ENCODE measurements at regions of chr1 and their contacts with region 1.

Region 1: DNA sequence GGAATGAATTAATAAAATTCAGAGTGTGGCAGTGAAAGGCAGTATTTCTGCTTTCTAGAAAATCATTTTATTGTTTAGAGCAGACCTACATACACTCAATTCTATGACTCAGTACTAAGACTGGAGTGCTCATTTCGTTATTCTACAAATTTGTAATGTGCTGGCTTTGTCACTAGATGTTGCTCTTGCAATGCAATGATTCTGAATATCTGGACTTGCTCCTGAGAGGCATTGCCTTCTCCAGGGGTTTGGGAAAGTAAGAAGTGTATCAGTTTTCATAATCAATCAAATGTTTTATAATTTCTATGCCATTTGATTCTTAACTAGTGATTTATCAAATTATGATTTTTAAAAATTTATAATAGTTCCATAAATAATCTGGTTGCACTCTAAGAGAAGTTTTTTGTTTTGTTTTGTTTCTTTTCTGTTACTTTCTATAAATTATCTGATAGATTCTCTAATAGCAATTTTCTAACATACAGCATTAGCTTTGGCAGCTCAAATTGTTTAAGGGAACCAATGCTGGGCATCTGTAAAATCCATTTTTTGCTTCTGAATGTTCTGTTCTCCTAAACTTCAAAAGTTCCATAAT is 280.5 kb upstream of the SGIP1 start:
- DNase-seq: peak in 6 of 9 donors; percentile 29 to 58 (median 46)
- ATAC-seq: peak; percentile 83
- H3K4me3 ChIP-seq: no peak overlapping the region
- H3K4me3 Mint-ChIP-seq: no peak overlapping the region
- H3K27ac ChIP-seq: no peak overlapping the region
- H3K27ac Mint-ChIP-seq: peak overlapping the region in 2 of 9 donors; percentile 19 to 64
- H3K4me1 ChIP-seq: peaks cover 10 to 12% of the 10 kb centered on the region in 2 donors
- H3K4me1 Mint-ChIP-seq: peaks cover 6 to 57% (median 19%) of the 10 kb centered on the region in 7 donors
- H3K27me3 ChIP-seq: no peaks in the 10 kb centered on the region
- H3K27me3 Mint-ChIP-seq: no peaks in the 10 kb centered on the region

Region 2: DNA sequence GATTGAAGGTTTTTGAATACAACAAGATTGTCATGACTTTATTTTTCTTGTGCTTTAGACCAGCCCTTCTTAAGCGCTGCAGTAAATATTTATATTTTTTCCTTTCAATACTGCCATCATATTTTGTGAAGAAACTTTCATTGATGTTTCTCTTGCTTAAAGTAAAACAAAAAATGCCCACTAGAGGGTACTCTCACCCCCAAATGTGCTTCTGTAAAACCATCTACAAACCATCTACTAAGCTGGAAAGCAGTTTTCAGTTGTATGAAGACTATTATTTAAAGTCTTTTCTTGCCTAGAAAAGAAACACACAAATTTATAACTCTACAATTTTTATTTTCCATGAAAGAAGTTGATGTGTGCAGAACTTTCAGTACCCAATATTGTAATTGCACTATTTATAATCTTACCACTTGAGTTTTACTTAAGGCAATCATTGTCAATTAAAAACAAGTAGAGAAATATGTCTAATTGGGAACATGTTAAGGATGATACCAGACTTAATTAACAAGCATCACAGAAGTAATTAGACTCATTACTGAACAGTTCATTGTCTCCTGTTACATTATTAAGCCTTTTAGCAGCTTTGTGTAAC is 822.2 kb before region 1 on chr1:
- CTCF ChIA-PET with region 1: no interaction called
- POLR2A ChIA-PET with region 1: no interaction called
- intact Hi-C with region 1: loop called in 1 of 2 experiments (anchors 5 kb)
- DNase-seq: peak in 5 of 9 donors; percentile 32 to 43 (median 33)
- ATAC-seq: peak; percentile 67
- H3K4me3 ChIP-seq: no peak overlapping the region
- H3K4me3 Mint-ChIP-seq: no peak overlapping the region
- H3K27ac ChIP-seq: no peak overlapping the region
- H3K27ac Mint-ChIP-seq: no peak overlapping the region
- H3K4me1 ChIP-seq: no peaks in the 10 kb centered on the region
- H3K4me1 Mint-ChIP-seq: peaks cover 0 to 28% (median 3%) of the 10 kb centered on the region in 7 donors
- H3K27me3 ChIP-seq: no peaks in the 10 kb centered on the region
- H3K27me3 Mint-ChIP-seq: no peaks in the 10 kb centered on the region

Region 3: DNA sequence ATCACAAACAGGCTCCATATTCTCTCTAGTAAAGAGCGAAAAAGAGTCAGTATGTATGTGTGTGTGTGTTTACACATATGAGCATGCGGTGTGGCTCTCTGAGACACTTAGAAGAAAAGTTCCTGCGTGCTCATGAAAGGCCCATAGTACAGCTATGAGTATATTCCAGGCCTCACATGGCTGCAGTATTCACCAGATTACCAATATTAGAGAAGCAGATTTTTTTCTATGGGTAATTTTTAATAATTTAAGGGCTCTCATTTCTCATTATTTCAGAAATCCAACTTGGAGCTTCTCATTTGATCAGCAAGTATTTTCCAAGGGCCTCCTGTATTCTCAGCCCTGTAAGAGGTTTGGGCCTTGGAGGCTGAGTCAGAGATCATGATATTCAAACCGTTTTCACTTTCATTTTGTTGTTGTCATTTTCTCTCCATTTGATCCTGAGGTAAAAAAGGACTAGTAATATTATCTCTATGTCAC is 47.6 kb after region 1 on chr1:
- CTCF ChIA-PET with region 1: no interaction called
- POLR2A ChIA-PET with region 1: no interaction called
- intact Hi-C with region 1: loop called in 1 of 2 experiments (anchors 1 kb)
- DNase-seq: peak in 7 of 9 donors; percentile 32 to 62 (median 45)
- ATAC-seq: peak; percentile 80
- H3K4me3 ChIP-seq: peak overlapping the region; percentile 12
- H3K4me3 Mint-ChIP-seq: peak overlapping the region; percentile 68 to 92 (median 85)
- H3K27ac ChIP-seq: peak overlapping the region; percentile 5
- H3K27ac Mint-ChIP-seq: peak overlapping the region; percentile 82 to 98 (median 91)
- H3K4me1 ChIP-seq: peaks cover 24 to 29% of the 10 kb centered on the region in 2 donors
- H3K4me1 Mint-ChIP-seq: peaks cover 12 to 46% (median 30%) of the 10 kb centered on the region in 7 donors
- H3K27me3 ChIP-seq: no peaks in the 10 kb centered on the region
- H3K27me3 Mint-ChIP-seq: peaks cover 0 to 3% (median 0%) of the 10 kb centered on the region in 5 donors

Region 4: DNA sequence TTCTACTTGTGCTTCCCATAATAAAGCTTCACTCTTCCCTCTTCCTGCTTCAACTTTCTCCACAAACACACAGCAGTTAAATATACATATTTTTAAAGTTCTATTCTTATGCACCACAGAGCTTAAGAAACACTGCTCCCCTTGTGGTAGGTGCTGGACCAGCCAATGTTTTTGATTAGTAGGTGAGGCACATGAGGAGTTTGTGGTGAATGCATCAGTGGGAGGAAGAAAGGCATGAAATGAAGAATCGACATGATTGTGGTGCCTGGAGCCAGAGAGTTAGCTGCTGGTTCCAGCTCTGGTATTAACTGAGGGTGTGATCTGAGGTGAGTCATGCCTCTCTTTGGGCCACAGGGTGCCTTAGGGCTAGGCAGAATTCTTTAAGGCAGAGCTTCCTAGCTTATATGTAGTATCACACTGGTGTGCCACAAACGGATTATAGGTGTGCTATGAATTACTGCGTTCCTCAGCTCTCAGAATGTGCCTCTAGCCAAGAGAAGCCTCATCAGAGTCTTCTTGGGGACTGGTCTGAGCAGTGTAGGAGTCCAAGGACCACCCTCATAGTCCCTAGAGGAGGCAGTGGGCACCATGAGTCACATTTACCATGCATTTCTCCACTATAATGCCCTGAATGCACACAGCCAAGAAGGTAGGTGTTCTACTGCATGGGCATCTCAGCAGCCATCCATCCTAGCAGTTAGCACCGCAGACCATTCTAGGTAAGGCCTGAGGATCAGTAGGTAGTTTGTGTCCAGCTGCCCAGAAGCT is 183.1 kb after region 1 on chr1:
- CTCF ChIA-PET with region 1: interaction called, 274 read pairs
- POLR2A ChIA-PET with region 1: interaction called, 4 read pairs
- intact Hi-C with region 1: no loop called
- DNase-seq: peak in 7 of 9 donors; percentile 12 to 52 (median 32)
- ATAC-seq: peak; percentile 79
- H3K4me3 ChIP-seq: no peak overlapping the region
- H3K4me3 Mint-ChIP-seq: no peak overlapping the region
- H3K27ac ChIP-seq: no peak overlapping the region
- H3K27ac Mint-ChIP-seq: peak overlapping the region in 4 of 9 donors; percentile 3 to 30 (median 8)
- H3K4me1 ChIP-seq: peaks cover 3 to 4% of the 10 kb centered on the region in 2 donors
- H3K4me1 Mint-ChIP-seq: peaks cover 6 to 36% (median 14%) of the 10 kb centered on the region in 7 donors
- H3K27me3 ChIP-seq: no peaks in the 10 kb centered on the region
- H3K27me3 Mint-ChIP-seq: no peaks in the 10 kb centered on the region

Region 5: GRCh38 chr1:66725885-66726665 is 472.6 kb after region 1 on chr1:
- CTCF ChIA-PET with region 1: interaction called, 6 read pairs
- POLR2A ChIA-PET with region 1: no interaction called
- intact Hi-C with region 1: loop called in 1 of 2 experiments (anchors 2 kb)
- DNase-seq: peak; percentile 10 to 75 (median 61)
- ATAC-seq: peak; percentile 87
- H3K4me3 ChIP-seq: no peak overlapping the region
- H3K4me3 Mint-ChIP-seq: no peak overlapping the region
- H3K27ac ChIP-seq: no peak overlapping the region
- H3K27ac Mint-ChIP-seq: peak overlapping the region in 1 of 9 donors; percentile 14
- H3K4me1 ChIP-seq: peaks cover 0 to 3% of the 10 kb centered on the region in 2 donors
- H3K4me1 Mint-ChIP-seq: peaks cover 8 to 23% (median 16%) of the 10 kb centered on the region in 7 donors
- H3K27me3 ChIP-seq: peaks cover 0 to 2% of the 10 kb centered on the region in 2 donors
- H3K27me3 Mint-ChIP-seq: peaks cover 9 to 28% (median 13%) of the 10 kb centered on the region in 5 donors

Measured in naive thymus-derived CD4-positive, alpha-beta T cell (primary cell).